ENCODE measurements at regions of chr10 and their contacts with region 1.

Region 1: GRCh38 chr10:511101-511848 is 178.2 kb downstream of the DIP2C start:
- DNase-seq: peak; percentile 94
- ATAC-seq: peak; percentile 99
- H3K4me3 ChIP-seq: no peak overlapping the region
- H3K27ac ChIP-seq: no peak overlapping the region
- H3K4me1 ChIP-seq: peaks cover 3% of the 10 kb centered on the region
- H3K27me3 ChIP-seq: no peaks in the 10 kb centered on the region
- CTCF ChIP-seq: peak; percentile 97
- POLR2A ChIP-seq: peak; percentile 42; the same call in 1 of the 2 replicates
- RAD21 ChIP-seq: peak; percentile 95

Region 2: GRCh38 chr10:248307-248706 is 263.0 kb before region 1 on chr10:
- CTCF ChIA-PET with region 1: no interaction called
- POLR2A ChIA-PET with region 1: no interaction called
- dilution Hi-C with region 1: no loop called
- in situ Hi-C with region 1: no loop called
- intact Hi-C with region 1: no loop called
- DNase-seq: no peak
- ATAC-seq: no peak
- H3K4me3 ChIP-seq: no peak overlapping the region
- H3K27ac ChIP-seq: no peak overlapping the region
- H3K4me1 ChIP-seq: no peaks in the 10 kb centered on the region
- H3K27me3 ChIP-seq: no peaks in the 10 kb centered on the region
- CTCF ChIP-seq: no peak
- POLR2A ChIP-seq: no peak
- RAD21 ChIP-seq: no peak

Region 3: DNA sequence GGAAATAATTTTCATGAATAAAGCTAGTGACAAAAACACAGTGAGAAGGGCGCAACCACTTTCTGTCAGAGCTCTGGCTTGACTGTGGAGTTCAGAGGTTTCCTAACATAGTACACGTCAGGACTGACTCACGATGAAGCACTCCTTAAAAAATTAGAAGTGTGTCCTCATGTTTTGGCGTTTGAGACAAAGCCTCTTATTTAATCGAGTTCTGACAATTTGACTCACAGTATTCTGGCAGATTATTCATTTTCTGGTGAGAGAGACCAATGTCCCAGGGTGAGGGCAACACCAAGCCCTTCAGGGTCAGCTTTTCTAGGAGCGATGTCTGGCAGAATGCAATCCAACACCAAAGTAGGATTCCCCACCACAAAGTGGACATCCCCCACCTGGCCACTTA is 69.5 kb after region 1 on chr10:
- CTCF ChIA-PET with region 1: no interaction called
- POLR2A ChIA-PET with region 1: no interaction called
- dilution Hi-C with region 1: no loop called
- in situ Hi-C with region 1: no loop called
- intact Hi-C with region 1: loop called (anchors 2 kb)
- DNase-seq: peak; percentile 97
- ATAC-seq: peak; percentile 91
- H3K4me3 ChIP-seq: no peak overlapping the region
- H3K27ac ChIP-seq: peak overlapping the region; percentile 59; the same call in 1 of the 2 replicates
- H3K4me1 ChIP-seq: peaks cover 13% of the 10 kb centered on the region
- H3K27me3 ChIP-seq: no peaks in the 10 kb centered on the region
- CTCF ChIP-seq: no peak
- POLR2A ChIP-seq: no peak
- RAD21 ChIP-seq: peak; percentile 28; the same call in 1 of the 2 replicates

Region 4: GRCh38 chr10:683448-684071 is 172.3 kb after region 1 on chr10:
- CTCF ChIA-PET with region 1: interaction called, 5 read pairs
- POLR2A ChIA-PET with region 1: interaction called, 5 read pairs
- dilution Hi-C with region 1: no loop called
- in situ Hi-C with region 1: loop called (anchors 25 kb)
- intact Hi-C with region 1: loop called (anchors 2 kb)
- DNase-seq: peak; percentile 99
- ATAC-seq: peak; percentile 91
- H3K4me3 ChIP-seq: peak overlapping the region; percentile 33
- H3K27ac ChIP-seq: peak overlapping the region; percentile 72
- H3K4me1 ChIP-seq: peaks cover 33% of the 10 kb centered on the region
- H3K27me3 ChIP-seq: no peaks in the 10 kb centered on the region
- CTCF ChIP-seq: peak; percentile 39
- POLR2A ChIP-seq: peak; percentile 81
- RAD21 ChIP-seq: peak; percentile 38

Region 5: DNA sequence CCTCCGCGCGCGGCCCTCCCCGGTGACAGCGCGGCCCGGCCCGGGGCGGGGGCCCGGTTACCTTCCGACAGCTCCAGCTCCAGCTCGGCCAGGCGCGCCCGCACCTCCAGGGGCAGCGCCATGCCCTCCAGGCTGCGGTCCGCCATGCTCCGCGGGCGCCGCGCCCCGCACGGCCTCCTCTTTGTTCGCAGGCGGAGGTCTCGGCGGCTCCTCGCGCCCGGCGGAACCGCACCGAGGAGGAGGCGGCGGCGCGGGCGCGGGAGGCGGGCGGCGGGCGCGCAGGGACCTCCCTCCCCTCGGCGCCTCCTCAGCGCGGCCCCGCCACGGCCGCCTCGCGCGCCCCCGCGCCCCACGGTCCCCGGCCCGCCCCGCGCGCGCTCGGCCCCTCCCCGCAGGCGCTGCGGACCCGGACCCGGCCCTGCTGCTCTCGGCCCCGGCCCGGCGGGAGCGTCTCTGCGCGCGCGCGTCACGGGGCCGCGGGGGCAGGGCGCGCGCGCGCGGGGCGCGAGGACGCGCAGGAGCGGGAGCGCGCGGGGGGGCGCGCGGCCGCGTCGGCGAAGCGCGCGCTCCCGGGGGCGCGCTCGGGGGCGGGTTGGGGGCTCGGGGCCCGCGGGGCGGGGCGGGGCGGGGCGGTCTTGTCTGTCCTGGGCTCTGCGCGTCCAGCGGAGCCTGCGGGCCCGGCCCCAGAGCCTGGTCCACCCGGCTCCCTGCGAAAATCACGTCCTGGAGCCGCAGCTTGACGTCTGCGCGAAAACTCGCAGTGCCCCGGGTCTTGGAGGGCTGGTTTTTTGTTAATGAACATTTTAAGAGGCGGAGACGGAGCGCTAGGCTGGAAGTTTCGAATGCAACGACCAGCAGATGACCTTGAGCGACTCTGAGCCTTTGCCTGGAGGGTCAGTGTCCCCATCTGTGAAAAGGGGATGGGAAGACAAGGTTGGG is 178.4 kb after region 1 on chr10 and contains the start of gene DIP2C:
- CTCF ChIA-PET with region 1: interaction called, 3 read pairs
- POLR2A ChIA-PET with region 1: interaction called, 5 read pairs
- dilution Hi-C with region 1: no loop called
- in situ Hi-C with region 1: loop called (anchors 25 kb)
- intact Hi-C with region 1: no loop called
- DNase-seq: peak; percentile 77
- ATAC-seq: peak; percentile 92
- H3K4me3 ChIP-seq: peak within 1 kb of the TSS; percentile 95
- H3K27ac ChIP-seq: peak within 1 kb of the TSS; percentile 93
- H3K4me1 ChIP-seq: peaks cover 23% of the 10 kb centered on the region
- H3K27me3 ChIP-seq: no peaks in the 10 kb centered on the region
- CTCF ChIP-seq: no peak
- POLR2A ChIP-seq: peak; percentile 55; the same call in 1 of the 2 replicates
- RAD21 ChIP-seq: no peak
- total RNA-seq, gene DIP2C: 8.6 and 9.2 TPM in 2 replicates

Region 6: DNA sequence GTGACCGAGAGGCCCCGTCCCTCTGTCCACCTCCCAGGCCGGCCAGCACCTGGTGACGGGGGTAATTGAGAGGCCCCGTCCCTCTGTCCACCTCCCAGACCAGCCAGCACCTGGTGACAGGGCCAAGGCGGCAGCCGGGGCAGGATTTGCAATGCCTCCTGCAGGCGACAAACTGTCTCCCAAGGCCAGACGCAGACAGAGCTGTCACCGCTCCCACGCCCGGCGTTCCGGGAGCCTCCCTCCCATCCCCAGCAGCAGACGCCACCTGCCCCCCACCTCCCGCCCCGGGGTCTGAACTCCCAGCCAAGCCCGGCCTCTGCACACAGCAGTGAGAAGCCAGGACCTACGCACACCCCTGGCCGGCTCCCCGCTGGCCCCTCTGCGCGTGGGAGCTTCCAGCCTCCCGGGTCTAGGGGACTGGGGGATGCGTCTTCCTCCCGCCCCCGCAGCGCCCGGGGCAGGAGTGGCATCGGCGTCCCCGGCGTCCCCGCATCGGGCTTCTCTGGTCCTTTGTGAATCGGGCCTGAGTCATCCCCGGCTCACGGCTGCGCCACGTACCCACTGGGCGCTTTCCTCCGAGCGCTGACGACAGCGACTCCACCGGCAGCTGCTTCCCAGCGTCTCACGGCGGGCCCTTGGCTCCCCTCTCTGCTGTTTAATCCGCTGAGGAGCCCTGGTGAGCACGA is 273.3 kb after region 1 on chr10:
- CTCF ChIA-PET with region 1: interaction called, 3 read pairs
- POLR2A ChIA-PET with region 1: no interaction called
- dilution Hi-C with region 1: no loop called
- in situ Hi-C with region 1: no loop called
- intact Hi-C with region 1: loop called (anchors 1 kb)
- DNase-seq: peak; percentile 88
- ATAC-seq: peak; percentile 87
- H3K4me3 ChIP-seq: peak overlapping the region; percentile 51
- H3K27ac ChIP-seq: peak overlapping the region; percentile 34; the same call in 1 of the 2 replicates
- H3K4me1 ChIP-seq: peaks cover 5% of the 10 kb centered on the region
- H3K27me3 ChIP-seq: no peaks in the 10 kb centered on the region
- CTCF ChIP-seq: peak; percentile 43
- POLR2A ChIP-seq: 0 out of 2 replicates have a peak, but pooled peaks have one; percentile 39
- RAD21 ChIP-seq: peak; percentile 57

Region 7: DNA sequence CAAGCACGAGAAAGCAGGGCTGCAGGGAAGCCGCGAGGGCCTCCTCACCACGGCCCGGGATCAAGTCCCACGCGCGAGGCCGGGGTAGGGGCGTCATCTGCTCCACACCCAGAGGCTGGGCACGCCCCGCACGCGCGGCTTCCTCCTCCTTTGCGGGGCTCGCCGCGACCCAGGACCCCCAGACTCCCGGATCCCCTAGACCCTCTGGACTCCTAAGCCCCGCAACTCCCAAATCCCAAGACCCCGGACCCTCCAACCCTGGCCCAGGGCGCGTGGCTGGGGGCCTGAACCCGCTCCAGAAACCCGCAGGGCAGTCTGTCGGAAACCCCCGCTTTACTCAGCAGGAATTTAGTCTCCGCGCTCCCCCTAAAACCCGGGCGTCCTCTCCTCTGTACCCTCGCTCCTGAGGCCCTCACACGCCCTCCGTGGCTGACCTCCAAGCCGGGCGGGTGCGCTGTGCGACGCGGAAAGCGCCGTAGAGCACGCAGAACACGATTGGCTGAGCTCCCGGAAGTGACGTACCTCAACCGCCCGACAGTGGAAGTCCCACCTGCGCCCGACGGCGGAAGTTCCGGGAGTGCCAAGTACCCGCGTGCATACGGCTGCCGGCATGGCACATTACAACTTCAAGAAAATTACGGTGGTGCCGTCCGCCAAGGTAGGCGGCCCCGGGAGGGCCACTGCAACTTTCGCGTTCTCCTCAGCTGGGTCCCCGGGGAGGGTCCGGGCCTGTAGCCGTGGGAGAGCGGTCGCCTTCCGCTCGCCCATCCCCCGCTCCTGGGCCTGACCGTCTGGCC is 476.8 kb after region 1 on chr10 and contains the start of gene GTPBP4:
- CTCF ChIA-PET with region 1: no interaction called
- POLR2A ChIA-PET with region 1: no interaction called
- dilution Hi-C with region 1: no loop called
- in situ Hi-C with region 1: no loop called
- intact Hi-C with region 1: loop called (anchors 5 kb)
- DNase-seq: peak; percentile 97
- ATAC-seq: peak; percentile 89
- H3K4me3 ChIP-seq: peak within 1 kb of the TSS; percentile 63
- H3K27ac ChIP-seq: peak within 1 kb of the TSS; percentile 86
- H3K4me1 ChIP-seq: peaks cover 13% of the 10 kb centered on the region
- H3K27me3 ChIP-seq: no peaks in the 10 kb centered on the region
- CTCF ChIP-seq: peak; percentile 28; the same call in 1 of the 2 replicates
- POLR2A ChIP-seq: peak; percentile 87; the same call in 1 of the 2 replicates
- RAD21 ChIP-seq: no peak
- total RNA-seq, gene GTPBP4: 46.2 and 71.7 TPM in 2 replicates

Measured in IMR-90 (cell line).